Caco-2 (cell line): ENCODE measurements at regions of chr1 and their contacts with region 1.

Region 1: DNA sequence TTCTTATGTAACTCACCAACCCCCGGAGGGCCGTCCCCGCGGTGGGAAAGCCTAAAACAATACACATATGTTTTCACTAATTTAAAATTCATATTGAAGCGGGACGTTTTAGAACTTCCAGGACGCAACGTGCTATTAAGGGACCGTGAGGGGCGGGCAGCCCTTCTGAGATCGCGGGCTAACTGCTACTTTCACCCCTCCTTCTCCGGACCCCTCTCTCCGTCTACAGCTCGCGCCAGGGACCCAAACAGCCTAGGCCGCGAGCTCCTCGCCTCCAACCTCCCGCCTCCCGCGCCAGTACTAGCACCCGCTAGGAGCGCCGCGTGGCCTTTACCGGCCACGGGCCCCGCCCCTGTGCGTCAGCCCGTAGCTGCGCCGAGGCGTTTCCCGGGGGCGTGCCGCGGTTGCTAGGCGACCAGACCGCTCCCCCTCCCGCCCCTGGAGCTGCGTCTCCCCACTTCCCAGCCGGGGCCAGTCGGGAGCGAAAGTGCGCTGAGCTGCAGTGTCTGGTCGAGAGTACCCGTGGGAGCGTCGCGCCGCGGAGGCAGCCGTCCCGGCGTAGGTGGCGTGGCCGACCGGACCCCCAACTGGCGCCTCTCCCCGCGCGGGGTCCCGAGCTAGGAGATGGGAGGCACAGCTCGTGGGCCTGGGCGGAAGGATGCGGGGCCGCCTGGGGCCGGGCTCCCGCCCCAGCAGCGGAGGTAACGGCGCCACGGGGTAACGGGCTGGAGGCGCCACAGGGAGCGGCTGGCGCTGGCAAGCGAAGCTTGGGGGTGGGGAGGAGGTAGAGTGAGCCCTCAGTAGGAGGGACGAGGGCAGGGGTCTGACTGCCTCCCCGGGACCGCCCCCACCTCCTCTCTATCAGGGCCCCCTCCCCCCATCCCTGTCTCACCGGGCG is at the start of gene DYRK3:
- DNase-seq: peak; percentile 89 to 90
- H3K4me3 ChIP-seq: peak within 1 kb of the TSS; percentile 86
- H3K4me3 Mint-ChIP-seq: peak within 1 kb of the TSS; percentile 78
- H3K27ac Mint-ChIP-seq: peak within 1 kb of the TSS; percentile 74
- H3K4me1 ChIP-seq: no peaks in the 10 kb centered on the region
- H3K4me1 Mint-ChIP-seq: peaks cover 7% of the 10 kb centered on the region
- H3K27me3 ChIP-seq: no peaks in the 10 kb centered on the region; the same call in 1 of the 2 replicates
- H3K27me3 Mint-ChIP-seq: no peaks in the 10 kb centered on the region
- CTCF ChIP-seq: no peak
- total RNA-seq, gene DYRK3: 0.16 TPM in 1 of 2 replicates, not detected in the other

Region 2: GRCh38 chr1:206445116-206445515 is 190.2 kb before region 1 on chr1:
- CTCF ChIA-PET with region 1: no interaction called
- POLR2A ChIA-PET with region 1: no interaction called
- intact Hi-C with region 1: no loop called
- DNase-seq: no peak
- H3K4me3 ChIP-seq: no peak overlapping the region
- H3K4me3 Mint-ChIP-seq: no peak overlapping the region
- H3K27ac Mint-ChIP-seq: no peak overlapping the region
- H3K4me1 ChIP-seq: no peaks in the 10 kb centered on the region
- H3K4me1 Mint-ChIP-seq: peaks cover 6% of the 10 kb centered on the region
- H3K27me3 ChIP-seq: no peaks in the 10 kb centered on the region
- H3K27me3 Mint-ChIP-seq: no peaks in the 10 kb centered on the region
- CTCF ChIP-seq: no peak

Region 3: GRCh38 chr1:206663832-206664652 is 28.7 kb after region 1 on chr1:
- CTCF ChIA-PET with region 1: interaction called, 46 read pairs
- POLR2A ChIA-PET with region 1: no interaction called
- intact Hi-C with region 1: loop called (anchors 1 kb)
- DNase-seq: peak; percentile 59 to 78
- H3K4me3 ChIP-seq: no peak overlapping the region
- H3K4me3 Mint-ChIP-seq: no peak overlapping the region
- H3K27ac Mint-ChIP-seq: no peak overlapping the region
- H3K4me1 ChIP-seq: peaks cover 3% of the 10 kb centered on the region; the same call in 1 of the 2 replicates
- H3K4me1 Mint-ChIP-seq: peaks cover 15% of the 10 kb centered on the region
- H3K27me3 ChIP-seq: no peaks in the 10 kb centered on the region
- H3K27me3 Mint-ChIP-seq: peaks cover 7% of the 10 kb centered on the region
- CTCF ChIP-seq: peak; percentile 72 to 96

Region 4: GRCh38 chr1:206685769-206686485 is 50.6 kb after region 1 on chr1:
- CTCF ChIA-PET with region 1: no interaction called
- POLR2A ChIA-PET with region 1: no interaction called
- intact Hi-C with region 1: loop called (anchors 2 kb)
- DNase-seq: peak; percentile 57 to 74
- H3K4me3 ChIP-seq: peak overlapping the region; percentile 72
- H3K4me3 Mint-ChIP-seq: peak overlapping the region; percentile 80
- H3K27ac Mint-ChIP-seq: peak overlapping the region; percentile 70
- H3K4me1 ChIP-seq: peaks cover 59% of the 10 kb centered on the region
- H3K4me1 Mint-ChIP-seq: peaks cover 46% of the 10 kb centered on the region
- H3K27me3 ChIP-seq: no peaks in the 10 kb centered on the region
- H3K27me3 Mint-ChIP-seq: no peaks in the 10 kb centered on the region
- CTCF ChIP-seq: no peak

Region 5: GRCh38 chr1:206708058-206708457 is 72.7 kb after region 1 on chr1:
- CTCF ChIA-PET with region 1: interaction called, 3 read pairs
- POLR2A ChIA-PET with region 1: no interaction called
- intact Hi-C with region 1: loop called (anchors 2 kb)
- DNase-seq: peak in 1 of 2 experiments; percentile 49
- H3K4me3 ChIP-seq: no peak overlapping the region
- H3K4me3 Mint-ChIP-seq: no peak overlapping the region
- H3K27ac Mint-ChIP-seq: no peak overlapping the region
- H3K4me1 ChIP-seq: peaks cover 26% of the 10 kb centered on the region
- H3K4me1 Mint-ChIP-seq: peaks cover 36% of the 10 kb centered on the region
- H3K27me3 ChIP-seq: no peaks in the 10 kb centered on the region
- H3K27me3 Mint-ChIP-seq: no peaks in the 10 kb centered on the region
- CTCF ChIP-seq: peak in 1 of 2 experiments; percentile 13

Region 6: GRCh38 chr1:206723812-206724472 is 88.6 kb after region 1 on chr1:
- CTCF ChIA-PET with region 1: no interaction called
- POLR2A ChIA-PET with region 1: no interaction called
- intact Hi-C with region 1: loop called (anchors 5 kb)
- DNase-seq: peak in 1 of 2 experiments; percentile 66
- H3K4me3 ChIP-seq: no peak overlapping the region
- H3K4me3 Mint-ChIP-seq: peak overlapping the region; percentile 6
- H3K27ac Mint-ChIP-seq: peak overlapping the region; percentile 59
- H3K4me1 ChIP-seq: peaks cover 21% of the 10 kb centered on the region
- H3K4me1 Mint-ChIP-seq: peaks cover 31% of the 10 kb centered on the region
- H3K27me3 ChIP-seq: no peaks in the 10 kb centered on the region
- H3K27me3 Mint-ChIP-seq: no peaks in the 10 kb centered on the region
- CTCF ChIP-seq: no peak

Region 7: DNA sequence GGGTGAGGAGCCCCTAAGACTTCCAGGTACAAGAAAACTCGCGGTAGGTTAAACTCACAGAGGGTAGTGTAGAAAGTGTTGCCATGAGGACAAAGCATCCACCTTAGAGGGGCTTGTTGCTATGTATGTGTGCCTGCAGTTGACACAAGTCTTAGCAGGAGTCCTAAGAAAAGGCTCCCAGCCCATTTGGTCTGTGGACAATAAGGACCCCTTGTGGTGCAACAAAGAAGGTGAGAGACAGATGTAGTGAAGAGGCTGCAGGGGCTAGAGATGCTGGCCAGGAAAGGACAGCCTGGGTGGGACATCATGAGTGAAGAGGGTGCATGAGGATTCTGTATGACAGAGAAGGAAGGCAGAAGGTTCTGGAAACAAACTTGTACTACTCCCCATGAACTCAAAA is 173.3 kb after region 1 on chr1:
- CTCF ChIA-PET with region 1: no interaction called
- POLR2A ChIA-PET with region 1: no interaction called
- intact Hi-C with region 1: loop called (anchors 1 kb)
- DNase-seq: peak; percentile 46 to 57
- H3K4me3 ChIP-seq: no peak overlapping the region
- H3K4me3 Mint-ChIP-seq: no peak overlapping the region
- H3K27ac Mint-ChIP-seq: no peak overlapping the region
- H3K4me1 ChIP-seq: no peaks in the 10 kb centered on the region
- H3K4me1 Mint-ChIP-seq: no peaks in the 10 kb centered on the region
- H3K27me3 ChIP-seq: no peaks in the 10 kb centered on the region
- H3K27me3 Mint-ChIP-seq: no peaks in the 10 kb centered on the region
- CTCF ChIP-seq: peak; percentile 48 to 59